Mucosa of descending colon (tissue), 3 donors: ENCODE measurements at regions of chr16 and their contacts with region 1.

Region 1: GRCh38 chr16:69469807-69470561 is 45.6 kb downstream of the CYB5B start:
- DNase-seq: no peak
- ATAC-seq: no peak
- H3K4me3 ChIP-seq: no peak overlapping the region
- H3K4me1 ChIP-seq: peaks cover 8% of the 10 kb centered on the region
- CTCF ChIP-seq: no peak

Region 2: DNA sequence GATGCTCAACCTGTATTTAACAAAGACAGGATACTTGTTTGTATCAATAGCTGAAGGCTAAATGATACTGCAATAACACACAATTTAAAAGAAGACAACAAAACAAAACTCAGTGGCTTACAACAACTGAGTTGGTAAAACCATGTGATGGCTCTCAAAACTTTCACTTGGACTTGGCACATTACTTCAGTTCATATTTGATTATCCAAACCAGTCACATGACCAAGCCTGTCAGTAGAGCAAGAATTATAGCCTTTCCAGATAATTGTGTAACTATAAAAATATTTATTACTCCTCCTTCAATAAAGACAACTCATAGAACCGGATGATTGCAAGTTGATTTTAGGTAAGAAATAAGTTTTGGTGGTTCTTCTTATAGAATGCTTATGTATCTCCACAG is 199.6 kb after region 1 on chr16:
- intact Hi-C with region 1: loop called in 1 of 2 experiments (anchors 10 kb)
- DNase-seq: no peak
- ATAC-seq: no peak
- H3K4me3 ChIP-seq: no peak overlapping the region
- H3K4me1 ChIP-seq: no peaks in the 10 kb centered on the region
- CTCF ChIP-seq: no peak